Activated CD4-positive, alpha-beta T cell treated with anti-CD3 and anti-CD28 coated beads, Interleukin-2, amount 10 ng/mL, durations not matched to agents 7 days and 5 days (primary cell): ENCODE measurements at regions of chr2 and their contacts with region 1.

Region 1: DNA sequence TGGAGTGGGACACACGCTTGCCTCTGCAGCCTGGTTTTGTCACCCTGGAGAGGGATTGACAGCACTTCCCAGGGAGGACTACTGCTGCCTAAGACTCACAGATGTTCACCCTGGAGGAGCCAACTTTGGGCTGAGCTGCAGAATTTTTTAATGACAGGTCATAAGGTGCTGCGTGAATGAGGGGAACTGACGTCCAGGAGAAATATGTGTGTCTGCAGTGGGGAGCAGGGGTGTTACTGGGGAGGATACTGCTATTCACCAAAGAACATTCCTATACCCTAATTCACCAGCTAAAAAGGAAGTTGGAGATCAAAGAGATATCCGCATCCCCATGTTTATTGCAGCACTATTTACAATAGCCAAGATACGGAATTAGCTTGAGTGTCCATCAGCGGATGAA is 144.4 kb downstream of the MGAT5 start:
- DNase-seq: no peak
- H3K4me3 Mint-ChIP-seq: no peak overlapping the region
- H3K27ac Mint-ChIP-seq: no peak overlapping the region
- H3K4me1 Mint-ChIP-seq: no peaks in the 10 kb centered on the region
- H3K27me3 Mint-ChIP-seq: no peaks in the 10 kb centered on the region

Region 2: DNA sequence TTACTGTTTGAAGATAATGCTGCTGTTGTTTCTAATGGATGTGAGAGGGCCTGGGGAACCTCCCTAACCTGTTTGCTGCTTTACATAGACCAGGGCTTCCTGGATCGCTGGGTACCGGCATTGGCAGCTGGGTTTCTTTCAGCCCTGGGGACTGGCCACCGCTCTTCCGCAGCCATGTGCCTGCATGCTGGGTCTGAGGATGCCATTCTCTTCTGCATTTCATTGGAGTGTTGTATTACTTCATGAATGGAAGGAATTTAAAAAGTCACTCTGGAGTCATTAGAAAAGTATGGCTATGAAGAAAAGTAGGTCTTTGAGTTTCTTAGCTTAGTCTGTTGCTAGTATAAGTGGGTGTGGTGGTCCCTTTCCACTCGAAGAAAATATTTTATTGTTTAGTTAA is 251.7 kb before region 1 on chr2:
- CTCF ChIA-PET with region 1: no interaction called
- POLR2A ChIA-PET with region 1: no interaction called
- DNase-seq: no peak
- H3K4me3 Mint-ChIP-seq: no peak overlapping the region
- H3K27ac Mint-ChIP-seq: no peak overlapping the region
- H3K4me1 Mint-ChIP-seq: peaks cover 22% of the 10 kb centered on the region
- H3K27me3 Mint-ChIP-seq: no peaks in the 10 kb centered on the region

Region 3: DNA sequence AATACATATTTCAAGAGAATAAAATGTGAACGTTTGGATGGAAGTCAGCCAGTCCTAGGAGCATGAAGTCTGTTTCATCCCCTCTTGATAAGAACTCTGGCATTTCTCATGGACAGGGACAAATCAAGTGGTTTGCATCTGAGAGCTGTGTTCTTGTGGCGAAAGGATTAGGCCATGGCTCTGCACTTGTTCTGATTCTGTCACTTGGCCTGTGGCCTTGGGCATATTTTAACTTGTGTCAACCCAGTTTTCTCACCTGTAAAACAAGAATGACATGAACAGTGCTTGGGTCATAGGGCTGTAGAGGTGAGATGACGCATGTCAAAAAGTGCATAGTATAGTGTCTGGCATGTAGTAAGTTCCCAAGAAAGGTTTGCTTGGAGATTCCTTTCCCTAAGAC is 18.6 kb before region 1 on chr2:
- CTCF ChIA-PET with region 1: no interaction called
- POLR2A ChIA-PET with region 1: no interaction called
- DNase-seq: no peak
- H3K4me3 Mint-ChIP-seq: no peak overlapping the region
- H3K27ac Mint-ChIP-seq: no peak overlapping the region
- H3K4me1 Mint-ChIP-seq: no peaks in the 10 kb centered on the region
- H3K27me3 Mint-ChIP-seq: no peaks in the 10 kb centered on the region

Region 4: GRCh38 chr2:134411828-134412638 is 13.7 kb after region 1 on chr2:
- CTCF ChIA-PET with region 1: interaction called, 10 read pairs
- POLR2A ChIA-PET with region 1: no interaction called
- DNase-seq: peak; percentile 84
- H3K4me3 Mint-ChIP-seq: no peak overlapping the region
- H3K27ac Mint-ChIP-seq: peak overlapping the region; percentile 31
- H3K4me1 Mint-ChIP-seq: peaks cover 40% of the 10 kb centered on the region
- H3K27me3 Mint-ChIP-seq: no peaks in the 10 kb centered on the region

Region 5: GRCh38 chr2:134431838-134432434 is 33.6 kb after region 1 on chr2:
- CTCF ChIA-PET with region 1: no interaction called
- POLR2A ChIA-PET with region 1: no interaction called
- DNase-seq: no peak
- H3K4me3 Mint-ChIP-seq: no peak overlapping the region
- H3K27ac Mint-ChIP-seq: no peak overlapping the region
- H3K4me1 Mint-ChIP-seq: no peaks in the 10 kb centered on the region
- H3K27me3 Mint-ChIP-seq: no peaks in the 10 kb centered on the region